Heart right ventricle (tissue), 16 donors: ENCODE measurements at regions of chr7 and their contacts with region 1.

Region 1: GRCh38 chr7:138886501-138886917 is 88.5 kb upstream of the ATP6V0A4 start:
- DNase-seq: peak in 1 of 2 donors; percentile 50
- ATAC-seq: peak in 3 of 8 donors; percentile 21 to 41 (median 30)
- H3K4me3 ChIP-seq: no peak overlapping the region
- H3K27ac ChIP-seq: no peak overlapping the region
- H3K4me1 ChIP-seq: peaks cover 0 to 17% (median 2%) of the 10 kb centered on the region in 9 donors
- H3K27me3 ChIP-seq: no peaks in the 10 kb centered on the region
- CTCF ChIP-seq: peak; percentile 48 to 72 (median 68)

Region 2: DNA sequence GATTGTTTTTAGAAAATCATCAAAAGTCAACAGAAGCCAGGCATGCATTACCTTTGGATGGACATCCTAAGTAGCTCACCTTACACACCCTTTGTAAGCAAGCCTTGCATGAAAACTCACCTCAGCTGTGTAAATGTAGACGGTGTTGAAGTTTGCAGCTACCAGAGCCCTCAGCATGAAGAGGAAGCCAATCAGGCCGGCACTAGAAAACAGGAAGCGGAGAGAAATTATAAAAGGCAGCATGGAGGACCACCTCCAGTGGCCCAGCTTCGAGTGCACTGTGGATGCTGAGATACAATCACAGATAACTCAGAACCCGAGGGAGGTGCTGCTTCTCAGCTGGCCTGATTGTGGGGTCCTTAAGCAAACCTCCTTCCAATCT is 260.7 kb before region 1 on chr7:
- intact Hi-C with region 1: no loop called
- DNase-seq: no peak
- ATAC-seq: no peak
- H3K4me3 ChIP-seq: no peak overlapping the region
- H3K27ac ChIP-seq: no peak overlapping the region
- H3K4me1 ChIP-seq: peaks cover 0 to 7% (median 0%) of the 10 kb centered on the region in 9 donors
- H3K27me3 ChIP-seq: peaks cover 0 to 3% (median 0%) of the 10 kb centered on the region in 7 donors
- CTCF ChIP-seq: no peak

Region 3: DNA sequence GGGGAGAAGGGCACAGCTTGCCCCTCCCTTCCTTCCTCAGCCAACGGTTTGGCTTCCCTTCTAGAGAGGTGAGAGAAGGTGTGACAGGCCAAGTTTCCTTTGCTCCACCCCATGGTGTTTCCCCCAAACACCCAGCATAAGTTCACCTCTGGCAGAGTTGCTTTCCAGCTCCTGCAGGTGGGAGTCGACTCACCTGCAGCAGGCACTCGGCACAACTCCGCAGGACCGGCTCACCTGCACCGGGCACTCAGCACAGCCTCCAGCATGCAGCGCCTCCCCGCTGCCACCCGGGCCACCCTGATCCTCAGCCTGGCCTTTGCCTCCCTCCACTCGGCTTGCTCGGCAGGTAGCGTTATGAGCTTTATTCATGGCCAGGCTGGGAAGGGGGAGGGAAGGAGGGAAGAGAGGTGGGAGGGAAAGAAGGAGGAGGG is 88.7 kb before region 1 on chr7 and contains the starts of genes ATP6V0A4 and TMEM213:
- intact Hi-C with region 1: no loop called
- DNase-seq: no peak
- ATAC-seq: no peak
- H3K4me3 ChIP-seq: no peak within 1 kb of the TSS
- H3K27ac ChIP-seq: no peak within 1 kb of the TSS
- H3K4me1 ChIP-seq: no peaks in the 10 kb centered on the region
- H3K27me3 ChIP-seq: peaks cover 0 to 33% (median 16%) of the 10 kb centered on the region in 7 donors
- CTCF ChIP-seq: no peak
- total RNA-seq, gene ATP6V0A4: not detected
- total RNA-seq, gene TMEM213: not detected

Region 4: DNA sequence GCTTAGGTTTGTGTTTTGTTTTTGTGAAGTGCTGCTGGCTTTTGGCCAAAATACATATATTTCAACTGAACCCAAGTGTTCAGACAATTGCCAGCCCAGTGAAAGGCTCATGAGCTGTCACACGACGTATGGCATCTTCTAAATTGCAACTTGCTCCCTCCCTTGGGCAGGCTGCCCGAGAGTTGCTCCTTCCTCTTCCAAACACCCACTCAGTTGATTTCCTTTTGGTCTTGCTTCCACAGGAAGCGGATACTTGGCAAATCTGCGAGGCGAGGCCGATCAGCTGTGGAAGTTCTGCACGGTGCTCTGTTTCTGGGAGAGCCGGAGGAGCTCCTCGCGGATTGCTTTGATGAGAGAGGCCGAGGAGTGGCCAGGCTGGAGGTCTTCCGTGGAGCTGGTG is 48.9 kb before region 1 on chr7:
- intact Hi-C with region 1: loop called in 1 of 10 experiments (anchors 10 kb)
- DNase-seq: peak; percentile 35 to 42
- ATAC-seq: peak; percentile 27 to 74 (median 60)
- H3K4me3 ChIP-seq: peak overlapping the region in 7 of 10 donors; percentile 10 to 49 (median 30)
- H3K27ac ChIP-seq: peak overlapping the region in 4 of 10 donors; percentile 1 to 34 (median 31)
- H3K4me1 ChIP-seq: peaks cover 0 to 15% (median 0%) of the 10 kb centered on the region in 9 donors
- H3K27me3 ChIP-seq: no peaks in the 10 kb centered on the region
- CTCF ChIP-seq: no peak